ENCODE measurements at regions of chr5 and their contacts with region 1.

Region 1: DNA sequence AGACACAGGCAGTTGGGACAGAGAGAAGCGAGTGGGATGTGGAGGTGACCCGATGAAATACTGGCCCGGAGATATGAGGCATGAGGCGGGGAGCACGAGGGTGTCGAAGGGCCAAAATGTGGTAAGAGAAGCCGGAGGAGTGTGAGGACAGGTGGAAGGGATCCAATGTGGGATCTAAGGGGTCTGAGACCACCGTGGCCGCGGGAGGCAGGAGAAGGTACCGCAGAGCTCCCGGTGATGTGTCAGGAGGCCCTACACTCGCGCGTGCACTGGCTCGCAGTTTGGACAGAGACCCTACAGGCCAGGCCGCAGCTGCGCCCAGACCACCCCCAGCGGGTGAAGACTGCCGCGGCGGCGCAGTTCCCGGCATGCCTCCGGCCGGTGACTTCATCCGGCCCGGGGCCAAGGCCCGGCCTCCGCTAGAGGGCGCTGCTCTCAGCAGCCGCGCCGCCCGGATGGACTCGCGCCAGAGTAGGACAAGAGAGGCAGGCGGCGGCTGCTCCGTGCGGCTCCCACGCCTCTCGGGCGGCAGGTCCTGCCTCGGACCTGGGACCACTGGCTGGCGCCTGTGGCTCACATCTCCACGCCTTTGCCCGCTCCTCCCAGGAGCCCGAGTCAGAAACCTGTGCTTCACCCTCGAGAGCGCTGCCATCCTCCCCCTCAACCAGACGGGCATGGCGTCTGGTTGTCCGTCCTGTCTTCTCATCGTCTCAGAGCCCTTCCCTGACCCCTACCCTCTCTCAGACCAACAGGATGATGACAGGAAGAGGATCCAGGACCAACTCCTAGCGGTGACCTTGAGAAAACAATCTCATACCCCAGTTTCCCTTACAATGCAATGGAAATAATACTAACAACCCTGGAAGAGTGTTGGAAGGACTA is 35.4 kb upstream of the STING1 start:
- DNase-seq: peak; percentile 88
- H3K4me3 Mint-ChIP-seq: peak overlapping the region; percentile 76
- H3K27ac Mint-ChIP-seq: peak overlapping the region; percentile 89
- H3K4me1 Mint-ChIP-seq: peaks cover 28% of the 10 kb centered on the region
- H3K27me3 Mint-ChIP-seq: peaks cover 1% of the 10 kb centered on the region

Region 2: DNA sequence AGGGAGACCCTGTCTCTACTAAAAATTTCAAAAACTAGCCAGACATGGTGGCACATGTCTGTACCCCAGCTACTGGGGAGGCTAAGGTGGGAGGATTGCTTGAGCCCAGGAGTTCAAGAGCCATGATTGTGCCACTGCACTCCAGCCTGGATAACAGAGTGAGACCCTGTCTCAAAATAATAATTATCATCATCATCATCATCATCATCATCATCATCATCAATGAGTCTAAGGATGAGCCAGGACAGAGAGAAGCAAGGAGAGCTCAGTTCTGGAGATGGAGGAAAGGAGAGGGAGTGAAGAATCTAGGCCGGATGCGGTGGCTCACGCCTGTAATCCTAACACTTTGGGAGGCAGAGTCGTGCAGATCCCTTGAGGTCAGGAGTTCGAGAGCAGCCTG is 261.1 kb before region 1 on chr5:
- CTCF ChIA-PET with region 1: no interaction called
- POLR2A ChIA-PET with region 1: no interaction called
- DNase-seq: no peak
- H3K4me3 Mint-ChIP-seq: no peak overlapping the region
- H3K27ac Mint-ChIP-seq: no peak overlapping the region
- H3K4me1 Mint-ChIP-seq: peaks cover 4% of the 10 kb centered on the region
- H3K27me3 Mint-ChIP-seq: peaks cover 18% of the 10 kb centered on the region

Region 3: GRCh38 chr5:139417214-139417613 is 100.7 kb before region 1 on chr5:
- CTCF ChIA-PET with region 1: interaction called, 170 read pairs
- POLR2A ChIA-PET with region 1: no interaction called
- DNase-seq: no peak
- H3K4me3 Mint-ChIP-seq: no peak overlapping the region
- H3K27ac Mint-ChIP-seq: no peak overlapping the region
- H3K4me1 Mint-ChIP-seq: peaks cover 59% of the 10 kb centered on the region
- H3K27me3 Mint-ChIP-seq: no peaks in the 10 kb centered on the region

Region 4: GRCh38 chr5:139439013-139439903 is 78.7 kb before region 1 on chr5 and contains the start of gene DNAJC18:
- CTCF ChIA-PET with region 1: interaction called, 12 read pairs
- POLR2A ChIA-PET with region 1: no interaction called
- DNase-seq: peak; percentile 93
- H3K4me3 Mint-ChIP-seq: peak within 1 kb of the TSS; percentile 94
- H3K27ac Mint-ChIP-seq: peak within 1 kb of the TSS; percentile 99
- H3K4me1 Mint-ChIP-seq: peaks cover 59% of the 10 kb centered on the region
- H3K27me3 Mint-ChIP-seq: no peaks in the 10 kb centered on the region
- total RNA-seq, gene DNAJC18: 4.5 to 6.8 TPM

Region 5: GRCh38 chr5:139492700-139493192 is 25.2 kb before region 1 on chr5:
- CTCF ChIA-PET with region 1: interaction called, 22 read pairs
- POLR2A ChIA-PET with region 1: no interaction called
- DNase-seq: no peak
- H3K4me3 Mint-ChIP-seq: no peak overlapping the region
- H3K27ac Mint-ChIP-seq: peak overlapping the region; percentile 79
- H3K4me1 Mint-ChIP-seq: peaks cover 28% of the 10 kb centered on the region
- H3K27me3 Mint-ChIP-seq: no peaks in the 10 kb centered on the region